PC-3 (cell line): ENCODE measurements at regions of chr17 and their contacts with region 1.

Region 1: DNA sequence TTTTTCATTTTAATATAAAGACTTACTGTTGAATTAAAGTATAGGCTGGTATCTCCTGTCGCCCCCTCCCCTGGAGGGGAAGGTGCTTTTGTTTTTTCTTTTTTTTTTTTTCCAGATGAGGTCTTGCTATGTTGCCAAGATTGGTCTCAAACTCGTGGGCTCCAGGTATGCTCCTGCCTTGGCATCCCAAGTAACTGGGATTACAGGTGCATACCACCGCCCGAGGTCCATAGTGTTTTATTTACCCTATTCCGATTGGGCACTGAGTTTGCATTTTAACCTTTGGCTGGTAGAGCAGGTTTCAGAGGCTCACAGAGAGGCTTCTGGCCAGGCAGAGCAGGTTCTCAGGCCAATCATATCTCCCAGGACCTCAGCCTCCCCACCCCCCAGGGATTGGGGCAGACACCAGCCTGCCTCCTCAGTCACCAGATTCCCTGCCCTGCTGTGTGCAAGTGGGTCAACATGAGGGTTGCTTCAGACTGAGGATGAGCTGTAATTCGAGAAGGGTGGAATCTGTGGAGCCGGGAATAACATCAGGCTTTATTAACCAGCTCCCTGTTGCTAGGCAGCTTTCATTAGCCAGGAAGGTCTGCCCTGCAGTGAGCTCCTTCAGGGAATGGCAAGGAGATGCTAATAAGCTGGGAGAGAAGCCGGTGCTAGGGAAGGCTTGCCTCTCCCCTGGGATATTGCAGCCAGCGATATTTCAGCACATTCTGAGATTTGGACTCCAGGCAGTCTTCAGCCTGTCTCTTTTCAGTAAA is 10.4 kb downstream of the SGSM2 start:
- DNase-seq: peak; percentile 75
- ATAC-seq: peak; percentile 90
- H3K4me3 ChIP-seq: no peak overlapping the region
- H3K27ac ChIP-seq: peak overlapping the region; percentile 15
- H3K4me1 ChIP-seq: peaks cover 27% of the 10 kb centered on the region
- H3K27me3 ChIP-seq: no peaks in the 10 kb centered on the region
- CTCF ChIP-seq: no peak

Region 2: DNA sequence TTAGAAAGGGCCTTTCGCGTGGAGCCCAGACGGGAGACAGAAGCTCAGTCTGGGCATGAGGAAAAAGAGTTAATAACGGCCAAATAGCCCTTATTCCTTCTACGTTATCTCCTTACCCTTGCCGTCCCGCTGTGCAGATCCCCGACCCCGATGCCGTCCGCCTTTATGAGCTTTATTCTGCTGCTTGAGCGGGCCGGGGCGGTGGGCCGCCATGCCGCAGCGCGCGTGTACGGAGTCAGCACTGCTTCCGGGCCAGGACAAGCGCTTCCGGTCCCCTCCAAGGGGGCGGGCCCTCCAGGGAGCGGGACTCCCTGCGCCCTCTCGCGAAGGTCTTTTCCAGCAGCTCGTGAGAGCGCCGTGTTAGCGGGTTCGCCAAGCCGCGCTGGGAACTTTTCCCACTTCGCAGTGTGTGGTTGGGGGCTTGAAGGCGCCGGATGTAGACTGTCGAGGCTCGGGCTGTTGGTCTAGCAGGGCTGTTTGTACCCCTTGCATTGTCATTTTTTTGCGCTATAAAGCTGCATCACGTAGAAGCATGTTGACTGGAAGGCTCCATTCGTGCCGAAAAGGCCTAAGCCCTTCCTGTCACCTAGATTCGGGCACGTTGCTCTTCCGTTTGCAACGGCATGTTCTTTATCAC is 11.4 kb before region 1 on chr17 and contains the start of gene TSR1:
- CTCF ChIA-PET with region 1: interaction called, 26 read pairs
- POLR2A ChIA-PET with region 1: no interaction called
- intact Hi-C with region 1: loop called (anchors 2 kb)
- DNase-seq: peak; percentile 85
- ATAC-seq: peak; percentile 83
- H3K4me3 ChIP-seq: peak within 1 kb of the TSS; percentile 99
- H3K27ac ChIP-seq: peak within 1 kb of the TSS; percentile 63
- H3K4me1 ChIP-seq: peaks cover 19% of the 10 kb centered on the region
- H3K27me3 ChIP-seq: no peaks in the 10 kb centered on the region
- CTCF ChIP-seq: no peak; the same call in 1 of the 2 replicates
- total RNA-seq, gene TSR1: 70.3 and 90.2 TPM in 2 replicates